PC-9 (cell line): ENCODE measurements at regions of chr21 and their contacts with region 1.

Region 1: GRCh38 chr21:41768437-41769061 is 1.7 kb upstream of the RIPK4 start:
- DNase-seq: peak; percentile 28 to 80
- H3K4me3 ChIP-seq: peak overlapping the region; percentile 100
- H3K27ac ChIP-seq: peak overlapping the region; percentile 99
- H3K4me1 ChIP-seq: peaks cover 12% of the 10 kb centered on the region
- H3K27me3 ChIP-seq: no peaks in the 10 kb centered on the region
- CTCF ChIP-seq: no peak; the same call in 1 of the 2 replicates

Region 2: DNA sequence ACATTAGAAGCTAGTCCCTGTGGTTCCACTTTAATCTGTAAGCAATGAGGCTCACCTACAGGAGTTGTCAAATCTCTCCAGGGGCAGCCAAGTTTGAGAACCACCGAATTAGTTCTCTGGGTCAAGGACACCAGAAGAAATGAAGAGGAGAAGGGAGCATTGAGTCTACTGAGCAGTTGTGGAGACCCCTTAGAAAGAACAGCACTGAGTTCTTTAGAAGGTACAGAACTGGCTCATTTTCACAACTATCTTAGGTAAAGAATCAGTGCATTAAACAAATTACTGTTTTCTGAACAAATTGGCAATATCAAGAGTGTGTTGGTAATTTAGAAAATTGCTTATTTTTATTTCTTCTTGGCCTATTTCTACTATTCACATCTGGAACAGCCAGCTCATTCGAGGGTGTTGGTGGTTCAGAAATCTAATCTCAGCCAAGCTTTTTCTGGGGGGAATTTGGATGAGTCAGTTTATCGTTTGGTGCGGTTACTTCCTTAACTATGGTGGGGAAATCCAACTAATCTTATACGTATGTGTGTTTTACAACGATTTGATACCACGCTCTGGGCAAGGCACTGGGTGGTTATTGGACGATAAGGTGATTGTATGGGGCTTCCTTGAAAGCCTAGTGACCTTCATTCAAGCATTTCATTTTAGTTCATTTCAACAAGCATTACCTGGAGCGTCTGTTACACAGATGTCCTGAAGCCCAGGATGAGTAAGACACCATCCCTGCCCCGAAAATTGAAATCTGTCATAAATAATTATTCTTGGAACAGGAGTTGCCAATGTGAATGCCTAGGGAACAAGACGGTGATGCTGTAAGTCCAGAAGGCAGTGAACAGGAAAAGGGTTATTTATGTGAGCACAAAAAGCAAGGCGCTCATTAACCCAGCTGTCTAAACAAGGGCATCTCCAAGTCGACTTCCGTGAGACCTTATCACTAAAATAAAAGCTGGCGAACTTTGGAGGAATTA is 208.6 kb before region 1 on chr21:
- CTCF ChIA-PET with region 1: no interaction called
- POLR2A ChIA-PET with region 1: no interaction called
- intact Hi-C with region 1: no loop called
- DNase-seq: no peak
- H3K4me3 ChIP-seq: no peak overlapping the region
- H3K27ac ChIP-seq: no peak overlapping the region
- H3K4me1 ChIP-seq: no peaks in the 10 kb centered on the region; the same call in 1 of the 2 replicates
- H3K27me3 ChIP-seq: no peaks in the 10 kb centered on the region
- CTCF ChIP-seq: no peak

Region 3: DNA sequence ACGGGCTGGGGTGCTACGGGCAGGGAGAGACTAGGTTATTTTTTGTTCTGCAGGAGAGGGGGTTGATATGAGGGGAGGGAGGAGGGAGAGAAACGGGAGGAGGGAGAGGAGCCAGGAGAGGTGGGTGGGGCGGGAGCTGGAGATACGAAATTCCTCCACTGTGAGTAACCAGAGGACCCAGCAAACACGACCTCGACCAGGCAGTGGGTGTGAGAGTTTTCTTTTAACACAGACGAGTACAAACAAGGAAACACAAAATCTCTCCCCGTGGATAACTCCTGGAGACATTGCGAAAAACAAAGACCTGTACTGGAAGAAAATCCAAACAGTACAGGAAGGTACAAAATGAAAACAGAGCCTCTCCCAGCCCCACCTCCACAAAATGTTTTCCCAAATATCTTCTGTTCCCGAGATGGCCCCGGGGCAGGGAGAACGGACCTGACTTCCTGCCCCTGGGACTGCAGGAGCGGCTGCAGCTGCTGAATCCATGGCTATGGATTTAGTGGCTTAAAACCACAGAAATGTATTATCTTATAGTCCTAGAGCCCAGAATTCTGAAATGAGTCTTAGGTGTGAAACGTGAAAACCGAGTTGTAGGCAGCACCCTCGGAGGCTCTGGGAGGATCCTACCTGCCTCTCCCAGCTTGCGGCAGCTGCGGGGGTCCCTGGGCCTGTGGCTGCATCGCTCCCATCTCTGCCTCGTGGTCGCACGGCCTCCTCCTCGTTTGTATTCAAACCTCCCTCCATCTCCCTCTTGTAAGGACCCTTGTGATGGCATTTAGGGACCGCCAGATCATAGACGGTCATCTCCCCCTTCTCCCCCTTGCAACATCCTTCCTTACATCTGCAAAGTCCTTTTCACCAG is 83.9 kb before region 1 on chr21:
- CTCF ChIA-PET with region 1: no interaction called
- POLR2A ChIA-PET with region 1: interaction called, 31 read pairs
- intact Hi-C with region 1: loop called (anchors 1 kb)
- DNase-seq: peak; percentile 69 to 92
- H3K4me3 ChIP-seq: peak overlapping the region; percentile 7; the same call in 1 of the 2 replicates
- H3K27ac ChIP-seq: peak overlapping the region; percentile 99
- H3K4me1 ChIP-seq: peaks cover 77% of the 10 kb centered on the region
- H3K27me3 ChIP-seq: no peaks in the 10 kb centered on the region
- CTCF ChIP-seq: no peak

Region 4: DNA sequence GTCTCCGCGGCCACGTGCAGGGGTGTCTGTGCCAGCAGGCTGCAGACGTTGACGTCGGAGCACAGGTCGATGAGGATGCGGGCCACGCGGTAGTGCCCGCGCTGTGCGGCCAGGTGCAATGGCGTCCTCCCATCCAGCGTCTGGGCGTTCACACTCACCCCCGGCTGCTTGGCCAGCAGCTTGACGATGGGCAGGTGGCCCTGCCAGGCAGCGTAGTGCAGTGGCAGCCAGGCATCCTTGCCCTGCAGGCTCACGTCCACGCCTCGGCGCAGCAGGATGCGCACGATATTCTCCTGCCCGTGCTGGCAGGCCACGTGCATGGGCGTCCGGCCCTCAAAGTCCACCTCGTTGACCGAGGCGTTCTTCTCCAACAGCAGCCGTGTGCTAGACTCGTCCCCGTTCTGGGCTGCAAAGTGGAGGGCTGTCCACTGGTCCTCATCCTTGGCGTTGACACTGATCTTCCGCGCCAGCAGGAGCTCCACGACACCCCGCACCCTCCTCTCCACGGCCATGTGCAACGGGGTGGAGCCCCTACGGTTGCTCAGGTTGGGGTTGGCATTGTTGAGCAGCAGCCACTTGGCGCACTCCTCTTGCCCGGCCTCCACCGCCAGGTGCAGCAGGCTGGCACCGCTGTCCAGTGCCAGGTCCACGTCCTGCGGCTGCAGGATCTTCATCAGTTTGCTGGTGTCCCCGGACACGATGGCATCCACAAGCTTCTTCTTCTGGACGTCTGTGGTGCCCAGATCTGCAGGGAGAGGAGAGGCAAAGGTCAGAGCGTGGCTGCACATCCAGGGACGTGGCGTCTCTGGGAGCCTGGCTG is 27.1 kb before region 1 on chr21:
- CTCF ChIA-PET with region 1: no interaction called
- POLR2A ChIA-PET with region 1: no interaction called
- intact Hi-C with region 1: no loop called
- DNase-seq: no peak
- H3K4me3 ChIP-seq: no peak overlapping the region
- H3K27ac ChIP-seq: no peak overlapping the region
- H3K4me1 ChIP-seq: no peaks in the 10 kb centered on the region
- H3K27me3 ChIP-seq: no peaks in the 10 kb centered on the region
- CTCF ChIP-seq: no peak

Region 5: DNA sequence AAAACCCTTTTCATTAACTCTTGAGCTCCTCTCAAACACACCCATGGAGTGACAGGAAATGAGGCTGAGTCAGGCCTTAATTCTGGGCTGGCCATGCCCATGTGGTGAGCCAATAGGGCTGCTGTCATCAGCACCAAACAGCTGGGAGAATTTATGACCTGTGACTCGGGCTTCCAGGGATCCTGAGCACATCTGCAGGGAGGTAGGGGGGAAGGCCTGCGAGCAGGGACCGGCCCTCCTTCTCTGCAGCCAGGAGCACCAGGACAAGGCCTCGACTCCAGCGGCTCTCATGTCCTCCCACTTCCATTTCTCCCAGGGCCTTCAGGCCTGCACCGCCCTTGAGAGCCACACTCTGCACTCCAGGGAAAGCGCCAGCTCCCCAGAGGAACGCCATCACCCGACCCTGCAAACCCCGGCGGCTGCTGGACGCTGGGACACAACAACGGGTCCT is 16.3 kb before region 1 on chr21:
- CTCF ChIA-PET with region 1: no interaction called
- POLR2A ChIA-PET with region 1: interaction called, 11 read pairs
- intact Hi-C with region 1: no loop called
- DNase-seq: peak in 1 of 2 experiments; percentile 68
- H3K4me3 ChIP-seq: peak overlapping the region; percentile 25; the same call in 1 of the 2 replicates
- H3K27ac ChIP-seq: peak overlapping the region; percentile 68
- H3K4me1 ChIP-seq: peaks cover 75% of the 10 kb centered on the region
- H3K27me3 ChIP-seq: no peaks in the 10 kb centered on the region
- CTCF ChIP-seq: no peak

Region 6: GRCh38 chr21:42601656-42602055 is 833.1 kb after region 1 on chr21:
- CTCF ChIA-PET with region 1: no interaction called
- POLR2A ChIA-PET with region 1: no interaction called
- intact Hi-C with region 1: no loop called
- DNase-seq: no peak
- H3K4me3 ChIP-seq: no peak overlapping the region
- H3K27ac ChIP-seq: no peak overlapping the region
- H3K4me1 ChIP-seq: no peaks in the 10 kb centered on the region
- H3K27me3 ChIP-seq: 0 out of 2 replicates have a peak, but pooled peaks cover 2% of the 10 kb centered on the region
- CTCF ChIP-seq: no peak